ENCODE measurements at regions of chr20 and their contacts with region 1.

Region 1: DNA sequence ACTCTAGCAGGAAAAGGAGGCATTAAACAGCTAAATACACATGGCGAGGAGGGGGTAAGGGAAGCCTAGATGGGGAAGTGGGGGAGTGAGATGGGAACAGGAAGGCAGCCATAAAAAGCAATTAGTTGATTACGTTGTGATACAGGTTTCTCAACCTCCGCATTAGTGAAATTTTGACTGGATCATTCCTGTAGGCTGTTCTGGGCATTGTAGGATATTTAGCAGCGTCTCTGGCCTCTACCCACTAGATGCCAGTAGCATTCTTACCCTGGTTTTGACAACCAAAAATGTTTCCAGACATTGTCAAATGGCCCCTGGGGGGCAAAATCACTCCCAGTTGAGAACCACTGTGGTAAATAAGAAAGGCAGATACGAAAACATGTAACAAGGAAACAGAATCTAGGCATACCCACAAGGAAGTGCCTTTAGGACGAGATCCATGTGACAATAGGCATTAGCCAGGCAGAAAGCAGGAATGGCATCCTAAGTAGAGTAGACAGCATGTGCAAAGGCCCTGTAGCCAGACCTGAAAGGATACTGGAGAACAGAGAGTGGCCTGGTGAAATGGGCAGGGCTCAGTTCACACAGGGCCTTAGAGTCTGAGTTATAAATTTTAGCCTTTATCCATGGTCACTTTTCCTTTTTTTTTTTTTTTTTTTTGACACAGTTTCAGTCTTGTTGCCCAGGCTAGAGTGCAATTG is 25.8 kb upstream of the PTPN1 start:
- DNase-seq: no peak
- ATAC-seq: no peak
- H3K4me3 Mint-ChIP-seq: peak overlapping the region; percentile 80
- H3K27ac Mint-ChIP-seq: peak overlapping the region; percentile 87
- H3K4me1 Mint-ChIP-seq: peaks cover 56% of the 10 kb centered on the region
- H3K27me3 Mint-ChIP-seq: no peaks in the 10 kb centered on the region

Region 2: GRCh38 chr20:50379049-50379990 is 105.1 kb before region 1 on chr20:
- CTCF ChIA-PET with region 1: no interaction called
- DNase-seq: no peak
- ATAC-seq: no peak
- H3K4me3 Mint-ChIP-seq: no peak overlapping the region
- H3K27ac Mint-ChIP-seq: no peak overlapping the region
- H3K4me1 Mint-ChIP-seq: peaks cover 54% of the 10 kb centered on the region
- H3K27me3 Mint-ChIP-seq: peaks cover 2% of the 10 kb centered on the region

Region 3: GRCh38 chr20:50504231-50504823 is 19.9 kb after region 1 on chr20:
- CTCF ChIA-PET with region 1: interaction called, 10 read pairs
- DNase-seq: no peak
- ATAC-seq: no peak
- H3K4me3 Mint-ChIP-seq: no peak overlapping the region
- H3K27ac Mint-ChIP-seq: no peak overlapping the region
- H3K4me1 Mint-ChIP-seq: peaks cover 16% of the 10 kb centered on the region
- H3K27me3 Mint-ChIP-seq: no peaks in the 10 kb centered on the region

Region 4: DNA sequence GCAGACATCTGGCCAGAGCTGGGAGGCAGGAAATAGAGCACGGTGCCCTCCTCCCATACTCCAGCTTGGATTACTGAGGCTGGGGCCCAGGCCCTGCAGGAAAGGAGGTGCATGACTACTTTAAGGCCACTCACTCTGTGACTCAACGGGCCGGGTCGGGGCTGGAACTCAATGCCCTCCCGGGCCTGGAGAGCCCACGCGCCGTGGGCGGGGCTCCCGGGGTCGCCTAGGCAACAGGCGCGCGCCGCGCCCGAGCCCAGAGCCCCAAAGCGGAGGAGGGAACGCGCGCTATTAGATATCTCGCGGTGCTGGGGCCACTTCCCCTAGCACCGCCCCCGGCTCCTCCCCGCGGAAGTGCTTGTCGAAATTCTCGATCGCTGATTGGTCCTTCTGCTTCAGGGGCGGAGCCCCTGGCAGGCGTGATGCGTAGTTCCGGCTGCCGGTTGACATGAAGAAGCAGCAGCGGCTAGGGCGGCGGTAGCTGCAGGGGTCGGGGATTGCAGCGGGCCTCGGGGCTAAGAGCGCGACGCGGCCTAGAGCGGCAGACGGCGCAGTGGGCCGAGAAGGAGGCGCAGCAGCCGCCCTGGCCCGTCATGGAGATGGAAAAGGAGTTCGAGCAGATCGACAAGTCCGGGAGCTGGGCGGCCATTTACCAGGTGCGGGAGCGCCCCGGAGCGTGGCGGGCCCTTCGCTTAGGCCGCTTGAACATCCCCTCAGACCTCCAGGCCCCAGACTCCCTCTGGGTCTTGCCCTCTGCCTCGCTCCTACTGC is 25.7 kb after region 1 on chr20 and contains the start of gene PTPN1:
- CTCF ChIA-PET with region 1: interaction called, 32 read pairs
- DNase-seq: peak; percentile 99
- ATAC-seq: peak; percentile 90
- H3K4me3 Mint-ChIP-seq: peak within 1 kb of the TSS; percentile 95
- H3K27ac Mint-ChIP-seq: peak within 1 kb of the TSS; percentile 81
- H3K4me1 Mint-ChIP-seq: peaks cover 41% of the 10 kb centered on the region
- H3K27me3 Mint-ChIP-seq: no peaks in the 10 kb centered on the region
- total RNA-seq, gene PTPN1: 62.5 to 74.7 TPM